GM12878 (cell line): ENCODE measurements at regions of chr20 and their contacts with region 1.

Region 1: DNA sequence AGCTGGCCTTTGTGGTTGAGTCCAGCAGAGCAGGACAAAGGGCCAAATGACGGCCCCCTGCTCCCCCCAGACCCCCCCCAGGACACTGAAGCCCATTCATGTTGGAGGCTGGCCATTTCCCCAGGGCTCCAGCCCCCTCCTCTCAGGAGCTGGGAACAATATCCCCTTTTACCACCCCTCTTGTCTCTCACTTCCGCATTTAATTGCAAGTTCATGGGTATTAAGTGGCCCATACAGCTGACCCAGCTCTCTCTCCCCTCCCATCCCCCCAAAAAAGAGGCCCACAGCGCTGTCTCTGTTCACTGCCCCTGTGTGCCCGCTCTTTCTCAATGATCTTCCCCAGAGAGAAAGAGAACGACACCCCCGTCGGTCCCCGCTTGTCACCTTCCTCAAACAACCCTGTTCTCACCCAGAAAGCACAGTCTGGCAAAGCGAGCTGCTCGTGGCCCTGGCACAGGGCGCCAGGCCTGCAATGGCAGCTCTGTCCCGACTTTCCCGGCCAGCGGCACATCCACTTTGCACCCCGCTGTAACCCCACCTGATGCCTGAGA is 30.4 kb downstream of the PREX1 start:
- DNase-seq: no peak
- ATAC-seq: peak; percentile 60
- H3K4me3 ChIP-seq: no peak overlapping the region
- H3K27ac ChIP-seq: peak overlapping the region; percentile 24; the same call in 1 of the 2 replicates
- H3K4me1 ChIP-seq: peaks cover 39% of the 10 kb centered on the region
- H3K27me3 ChIP-seq: no peaks in the 10 kb centered on the region
- CTCF ChIP-seq: no peak
- EP300 ChIP-seq: no peak
- POLR2A ChIP-seq: no peak
- RAD21 ChIP-seq: no peak

Region 2: DNA sequence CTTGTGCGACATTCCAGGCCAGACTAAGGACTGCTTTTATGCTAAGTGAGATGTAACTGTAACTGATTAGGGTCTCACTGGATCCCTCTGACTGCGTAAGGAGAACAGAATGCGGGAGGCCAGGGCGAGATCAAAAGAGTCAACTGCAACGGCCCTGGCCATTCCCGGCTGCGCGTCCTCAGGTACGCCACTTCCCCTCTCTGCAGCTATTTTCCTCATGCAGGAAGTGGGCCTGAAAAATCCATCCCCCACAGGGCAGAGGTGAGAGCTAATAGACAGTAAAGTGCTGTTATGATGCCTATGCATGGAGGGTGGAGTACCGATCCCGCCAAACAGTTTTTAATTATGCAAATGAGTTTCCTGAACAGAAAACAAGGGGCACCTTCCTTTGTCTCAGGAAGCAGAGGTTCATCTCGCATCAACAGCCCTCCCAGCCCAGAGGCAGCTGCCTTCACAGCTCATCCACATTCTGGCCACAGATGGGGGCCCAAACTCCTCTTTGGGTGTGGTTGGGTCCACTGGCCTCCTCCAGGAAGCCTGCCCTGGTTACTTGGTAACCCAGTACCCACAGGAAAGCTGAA is 21.1 kb after region 1 on chr20:
- CTCF ChIA-PET with region 1: interaction called, 4 read pairs
- POLR2A ChIA-PET with region 1: interaction called, 3 read pairs
- RAD21 ChIA-PET with region 1: interaction called, 9 read pairs
- SMC1A ChIA-PET with region 1: interaction called, 10 read pairs
- in situ Hi-C with region 1: no loop called
- intact Hi-C with region 1: no loop called
- DNase-seq: peak; percentile 59
- ATAC-seq: peak; percentile 60
- H3K4me3 ChIP-seq: peak overlapping the region; percentile 46; the same call in 1 of the 2 replicates
- H3K27ac ChIP-seq: peak overlapping the region; percentile 83
- H3K4me1 ChIP-seq: peaks cover 67% of the 10 kb centered on the region
- H3K27me3 ChIP-seq: no peaks in the 10 kb centered on the region
- CTCF ChIP-seq: no peak
- EP300 ChIP-seq: peak in 1 of 2 experiments; percentile 30; a peak in 1 of 4 replicates
- POLR2A ChIP-seq: peak; percentile 38; the same call in 1 of the 2 replicates
- RAD21 ChIP-seq: no peak

Region 3: GRCh38 chr20:48846498-48847485 is 49.4 kb after region 1 on chr20:
- CTCF ChIA-PET with region 1: no interaction called
- POLR2A ChIA-PET with region 1: no interaction called
- RAD21 ChIA-PET with region 1: no interaction called
- SMC1A ChIA-PET with region 1: no interaction called
- in situ Hi-C with region 1: no loop called
- intact Hi-C with region 1: no loop called
- DNase-seq: peak; percentile 93
- ATAC-seq: peak; percentile 97
- H3K4me3 ChIP-seq: no peak overlapping the region; the same call in 1 of the 2 replicates
- H3K27ac ChIP-seq: peak overlapping the region; percentile 91
- H3K4me1 ChIP-seq: peaks cover 36% of the 10 kb centered on the region
- H3K27me3 ChIP-seq: no peaks in the 10 kb centered on the region
- CTCF ChIP-seq: no peak
- EP300 ChIP-seq: peak; percentile 92 to 97
- POLR2A ChIP-seq: peak; percentile 49; the same call in 1 of the 2 replicates
- RAD21 ChIP-seq: no peak

Region 4: DNA sequence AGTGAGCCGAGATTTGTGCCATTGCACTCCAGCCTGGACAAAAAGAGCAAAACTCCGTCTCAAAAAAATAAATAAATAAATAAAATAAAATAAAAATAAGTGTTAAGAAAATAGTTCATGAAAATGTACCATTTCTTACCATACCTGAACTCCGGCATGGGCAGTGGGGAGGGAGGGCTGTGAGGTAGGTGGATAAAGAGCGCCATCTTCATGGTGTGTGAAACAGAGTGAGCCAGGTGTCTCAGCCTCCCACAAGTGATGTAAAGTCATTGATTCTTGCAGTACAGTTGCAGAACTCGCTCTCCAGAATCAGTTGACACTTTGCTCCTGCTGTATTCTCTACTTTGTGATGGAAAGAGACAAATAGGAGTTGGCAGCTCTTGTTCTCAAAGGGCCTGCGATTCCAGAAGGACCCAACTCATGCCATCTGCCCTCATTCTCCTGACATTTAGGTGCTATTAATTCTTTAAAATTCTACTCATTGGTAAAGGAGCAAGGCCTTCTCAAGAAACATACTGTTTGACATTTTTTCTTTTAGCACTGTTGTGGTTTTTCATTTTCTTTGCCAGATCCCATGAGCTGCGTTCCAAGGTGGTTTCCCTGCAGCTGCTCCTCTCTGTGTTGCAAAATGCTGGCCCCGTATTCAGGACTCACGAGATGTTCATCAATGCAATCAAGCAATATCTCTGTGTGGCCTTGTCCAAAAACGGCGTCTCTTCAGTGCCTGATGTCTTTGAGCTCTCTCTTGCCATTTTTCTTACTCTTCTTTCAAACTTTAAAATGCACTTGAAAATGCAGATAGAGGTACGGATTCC is 173.4 kb after region 1 on chr20:
- CTCF ChIA-PET with region 1: no interaction called
- POLR2A ChIA-PET with region 1: no interaction called
- RAD21 ChIA-PET with region 1: no interaction called
- SMC1A ChIA-PET with region 1: no interaction called
- in situ Hi-C with region 1: no loop called
- intact Hi-C with region 1: no loop called
- DNase-seq: no peak
- ATAC-seq: no peak
- H3K4me3 ChIP-seq: no peak overlapping the region
- H3K27ac ChIP-seq: no peak overlapping the region
- H3K4me1 ChIP-seq: no peaks in the 10 kb centered on the region
- H3K27me3 ChIP-seq: no peaks in the 10 kb centered on the region
- CTCF ChIP-seq: no peak
- EP300 ChIP-seq: no peak
- POLR2A ChIP-seq: no peak
- RAD21 ChIP-seq: no peak